ENCODE measurements at regions of chr14 and their contacts with region 1.

Region 1: DNA sequence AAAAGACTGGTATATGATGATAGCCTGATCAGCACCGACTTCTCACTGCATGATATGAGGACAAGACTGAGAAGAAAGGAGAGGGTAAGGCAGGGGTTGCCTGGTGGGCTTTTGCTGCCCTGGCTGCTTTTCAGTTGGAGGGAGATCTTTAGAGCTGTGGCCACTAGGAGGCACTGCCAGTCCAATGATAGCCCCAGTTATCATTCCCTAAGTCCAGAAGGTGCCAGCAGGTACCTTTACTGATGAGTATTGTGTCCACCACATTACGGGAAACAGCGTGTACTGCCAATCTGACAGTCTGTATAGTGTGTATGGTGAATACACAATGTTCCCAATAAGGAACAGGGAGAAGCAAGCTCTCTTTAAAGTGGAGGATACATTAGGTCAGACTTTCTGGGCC is 55.8 kb upstream of the CCDC175 start:
- DNase-seq: peak; percentile 43
- H3K4me3 ChIP-seq: no peak overlapping the region
- H3K27ac ChIP-seq: no peak overlapping the region
- H3K4me1 ChIP-seq: no peaks in the 10 kb centered on the region
- H3K27me3 ChIP-seq: peaks cover 15% of the 10 kb centered on the region
- CTCF ChIP-seq: peak; percentile 44

Region 2: DNA sequence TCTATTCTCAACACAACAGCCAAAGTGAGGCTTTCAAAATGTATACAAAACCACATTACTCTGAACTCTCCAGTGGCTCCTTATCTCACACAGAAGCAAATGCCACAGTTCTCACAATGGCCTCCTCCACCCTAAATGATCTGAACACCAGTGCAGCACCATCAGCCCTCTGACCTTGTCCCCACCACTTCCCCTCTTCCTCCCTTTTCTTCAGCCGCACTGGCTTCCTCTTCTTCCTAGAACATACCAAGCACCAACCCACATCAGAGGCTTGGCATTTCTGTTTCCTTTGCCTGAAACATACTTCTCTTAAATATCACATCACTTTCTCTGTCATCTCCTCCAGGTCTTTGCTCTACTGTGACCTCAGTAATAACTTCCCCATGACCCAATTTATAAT is 233.5 kb before region 1 on chr14:
- intact Hi-C with region 1: no loop called
- DNase-seq: no peak
- H3K4me3 ChIP-seq: no peak overlapping the region
- H3K27ac ChIP-seq: no peak overlapping the region
- H3K4me1 ChIP-seq: no peaks in the 10 kb centered on the region
- H3K27me3 ChIP-seq: no peaks in the 10 kb centered on the region
- CTCF ChIP-seq: no peak

Region 3: DNA sequence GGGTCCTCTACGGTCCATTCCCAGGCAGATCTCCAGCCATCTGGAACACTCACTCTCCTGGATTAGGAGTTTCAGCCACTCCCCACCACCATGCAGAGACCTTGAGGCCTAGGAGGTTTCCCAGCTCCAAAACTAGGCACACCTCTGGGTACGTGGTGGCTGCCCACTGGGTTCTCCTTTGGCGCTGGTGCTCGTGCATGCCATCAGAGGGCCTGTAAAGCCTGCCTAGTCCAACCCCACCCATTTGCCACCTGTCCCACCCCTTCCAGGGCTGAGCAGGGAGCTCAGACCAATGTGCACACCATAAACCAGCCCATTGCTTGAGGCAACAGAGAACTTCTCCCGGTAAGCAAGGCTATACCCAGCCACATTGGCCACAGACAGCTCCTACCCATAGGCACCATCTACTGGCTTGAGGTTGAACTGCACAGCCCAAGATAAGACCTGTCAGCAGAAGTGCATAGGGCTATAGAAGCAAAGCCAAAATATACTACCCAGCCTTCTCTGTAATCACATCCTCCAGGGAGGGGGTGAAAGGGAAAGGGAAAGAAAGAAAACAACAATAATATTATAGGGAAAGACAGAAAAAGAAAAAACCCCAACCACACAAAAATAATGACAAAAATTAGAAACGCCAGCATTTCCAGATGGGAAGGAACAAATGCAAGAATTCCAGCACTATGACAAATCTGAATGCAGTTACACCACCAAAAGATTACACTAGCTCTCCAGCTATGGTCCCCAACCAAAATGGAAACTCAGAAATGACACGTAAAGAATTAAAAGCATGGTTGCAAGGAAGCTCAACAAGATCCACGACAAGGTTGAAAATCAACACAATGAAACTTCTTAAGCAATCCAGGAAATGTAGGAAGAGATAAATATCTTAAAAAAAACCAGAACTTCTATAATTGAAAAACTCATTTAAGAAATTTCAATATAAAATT is 56.1 kb after region 1 on chr14:
- intact Hi-C with region 1: loop called (anchors 5 kb)
- DNase-seq: peak; percentile 57
- H3K4me3 ChIP-seq: no peak overlapping the region
- H3K27ac ChIP-seq: no peak overlapping the region
- H3K4me1 ChIP-seq: no peaks in the 10 kb centered on the region
- H3K27me3 ChIP-seq: no peaks in the 10 kb centered on the region
- CTCF ChIP-seq: peak; percentile 46

Region 4: DNA sequence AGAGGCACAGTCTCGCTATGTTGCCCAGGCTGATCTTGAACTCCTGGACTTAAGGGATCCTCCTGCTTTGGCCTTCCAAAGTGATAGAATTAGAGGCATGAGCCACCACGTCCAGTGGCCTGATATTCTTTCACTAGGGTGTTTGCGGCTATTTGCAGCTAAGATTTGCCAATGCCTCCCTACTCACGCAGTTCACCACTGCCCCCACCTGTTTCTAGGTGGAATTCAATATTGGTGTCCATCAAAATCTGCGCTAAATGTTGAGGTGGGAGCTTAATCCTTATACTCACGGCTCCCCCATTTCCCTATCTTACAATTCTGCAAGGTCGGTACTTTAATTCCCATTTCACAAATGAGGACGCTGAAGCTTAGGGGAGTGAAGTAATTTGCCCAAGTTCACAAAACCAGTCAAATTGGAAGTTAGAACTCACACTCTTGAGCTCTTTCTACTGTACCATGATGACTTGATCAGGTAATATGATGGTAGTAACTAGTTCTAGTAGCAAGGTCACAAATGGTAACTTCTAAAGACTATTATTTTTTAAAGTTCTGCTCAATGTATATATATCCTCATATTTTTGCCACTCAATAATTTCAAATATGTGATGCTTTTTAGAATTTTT is 265.5 kb after region 1 on chr14:
- intact Hi-C with region 1: loop called (anchors 5 kb)
- DNase-seq: peak; percentile 26
- H3K4me3 ChIP-seq: no peak overlapping the region
- H3K27ac ChIP-seq: no peak overlapping the region
- H3K4me1 ChIP-seq: no peaks in the 10 kb centered on the region
- H3K27me3 ChIP-seq: no peaks in the 10 kb centered on the region
- CTCF ChIP-seq: peak; percentile 17